CD4-positive, alpha-beta memory T cell (primary cell): ENCODE measurements at regions of chr1 and their contacts with region 1.

Region 1: GRCh38 chr1:201842472-201843027 is 13.6 kb downstream of the IPO9 start:
- DNase-seq: no peak
- H3K4me3 ChIP-seq: no peak overlapping the region
- H3K4me3 Mint-ChIP-seq: no peak overlapping the region
- H3K27ac ChIP-seq: no peak overlapping the region
- H3K27ac Mint-ChIP-seq: peak overlapping the region in 2 of 7 donors; percentile 66 to 72
- H3K4me1 ChIP-seq: peaks cover 15% of the 10 kb centered on the region
- H3K4me1 Mint-ChIP-seq: peaks cover 21 to 34% (median 28%) of the 10 kb centered on the region in 4 donors
- H3K27me3 ChIP-seq: no peaks in the 10 kb centered on the region
- H3K27me3 Mint-ChIP-seq: no peaks in the 10 kb centered on the region

Region 2: GRCh38 chr1:201828820-201829774 is 13.5 kb before region 1 on chr1 and contains the start of gene IPO9:
- CTCF ChIA-PET with region 1: interaction called, 16 read pairs
- POLR2A ChIA-PET with region 1: interaction called, 3 read pairs
- intact Hi-C with region 1: no loop called
- DNase-seq: peak; percentile 92 to 96 (median 94)
- H3K4me3 ChIP-seq: peak within 1 kb of the TSS; percentile 59 to 99
- H3K4me3 Mint-ChIP-seq: peak within 1 kb of the TSS; percentile 93 to 99 (median 97)
- H3K27ac ChIP-seq: peak within 1 kb of the TSS; percentile 81
- H3K27ac Mint-ChIP-seq: peak within 1 kb of the TSS; percentile 82 to 99 (median 96)
- H3K4me1 ChIP-seq: peaks cover 44% of the 10 kb centered on the region
- H3K4me1 Mint-ChIP-seq: peaks cover 30 to 51% (median 38%) of the 10 kb centered on the region in 4 donors
- H3K27me3 ChIP-seq: no peaks in the 10 kb centered on the region
- H3K27me3 Mint-ChIP-seq: no peaks in the 10 kb centered on the region
- total RNA-seq, gene IPO9: 41.2 to 42.7 TPM